Heart left ventricle (tissue), 16 donors: ENCODE measurements at regions of chr14 and their contacts with region 1.

Region 1: DNA sequence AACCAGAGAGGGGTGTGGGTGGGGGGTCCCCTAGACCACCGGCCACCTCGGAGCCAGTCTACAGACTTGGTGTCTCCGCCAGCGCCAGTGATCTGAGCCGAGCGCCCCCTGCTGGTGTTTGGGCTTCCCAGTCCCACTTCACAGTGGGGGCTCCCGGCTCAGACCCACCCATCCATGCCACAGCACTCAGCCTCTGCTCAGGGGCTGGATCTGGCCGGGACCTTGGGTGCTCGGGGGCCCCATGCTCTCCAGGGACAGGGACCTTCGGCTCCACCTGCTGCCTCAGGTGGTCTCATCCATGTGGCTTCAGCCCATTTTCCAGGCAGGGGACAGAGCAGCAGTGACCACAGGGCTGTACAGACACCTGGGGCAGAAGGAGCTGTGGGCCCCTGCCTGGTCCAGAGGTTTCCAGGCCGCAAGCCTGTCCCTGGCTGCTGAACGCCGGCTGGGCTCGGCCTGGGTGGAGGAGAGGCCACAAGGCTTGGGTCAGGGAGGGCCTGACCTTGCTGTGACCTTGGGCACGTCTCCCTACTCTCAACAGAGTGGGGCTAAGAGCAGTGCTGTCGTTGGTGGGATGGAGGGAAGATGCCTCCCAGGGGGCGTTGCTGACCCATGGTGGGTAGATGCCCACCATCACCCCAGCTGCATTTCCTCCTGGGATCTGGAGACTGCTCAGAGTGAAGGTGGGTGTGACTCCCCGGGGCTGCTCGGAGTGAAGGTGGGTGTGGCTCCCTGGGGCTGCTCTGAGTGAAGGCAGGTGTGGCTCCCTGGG is 86.3 kb downstream of the KIF26A start:
- DNase-seq: peak in 2 of 5 donors; percentile 28 to 74
- ATAC-seq: no peak
- H3K4me3 ChIP-seq: peak overlapping the region in 1 of 12 donors; percentile 45
- H3K27ac ChIP-seq: no peak overlapping the region
- H3K4me1 ChIP-seq: peaks cover 0 to 30% (median 6%) of the 10 kb centered on the region in 12 donors
- H3K27me3 ChIP-seq: peaks cover 0 to 27% (median 7%) of the 10 kb centered on the region in 9 donors
- CTCF ChIP-seq: peak; percentile 33 to 66 (median 54)
- POLR2A ChIP-seq: no peak

Region 2: GRCh38 chr14:104184911-104185499 is 39.7 kb before region 1 on chr14:
- intact Hi-C with region 1: loop called in 1 of 10 experiments (anchors 5 kb)
- DNase-seq: peak; percentile 66 to 81 (median 72)
- ATAC-seq: peak; percentile 40 to 86 (median 65)
- H3K4me3 ChIP-seq: no peak overlapping the region
- H3K27ac ChIP-seq: peak overlapping the region in 11 of 12 donors; percentile 25 to 85 (median 75)
- H3K4me1 ChIP-seq: peaks cover 0 to 37% (median 9%) of the 10 kb centered on the region in 12 donors
- H3K27me3 ChIP-seq: no peaks in the 10 kb centered on the region
- CTCF ChIP-seq: no peak
- POLR2A ChIP-seq: no peak